ENCODE measurements at regions of chr12 and their contacts with region 1.

Region 1: GRCh38 chr12:2284857-2285256 is 232.1 kb downstream of the CACNA1C start:
- DNase-seq: peak; percentile 64 to 91
- H3K4me3 ChIP-seq: no peak overlapping the region
- H3K27ac ChIP-seq: no peak overlapping the region
- H3K4me1 ChIP-seq: peaks cover 5 to 18% (median 6%) of the 10 kb centered on the region in 4 experiments
- H3K27me3 ChIP-seq: peaks cover 0 to 3% (median 0%) of the 10 kb centered on the region in 4 experiments; a peak in 1 of 7 replicates
- CTCF ChIP-seq: peak; percentile 86 to 95 (median 90)
- EP300 ChIP-seq: no peak
- POLR2A ChIP-seq: no peak
- RAD21 ChIP-seq: peak; percentile 82 to 87

Region 2: DNA sequence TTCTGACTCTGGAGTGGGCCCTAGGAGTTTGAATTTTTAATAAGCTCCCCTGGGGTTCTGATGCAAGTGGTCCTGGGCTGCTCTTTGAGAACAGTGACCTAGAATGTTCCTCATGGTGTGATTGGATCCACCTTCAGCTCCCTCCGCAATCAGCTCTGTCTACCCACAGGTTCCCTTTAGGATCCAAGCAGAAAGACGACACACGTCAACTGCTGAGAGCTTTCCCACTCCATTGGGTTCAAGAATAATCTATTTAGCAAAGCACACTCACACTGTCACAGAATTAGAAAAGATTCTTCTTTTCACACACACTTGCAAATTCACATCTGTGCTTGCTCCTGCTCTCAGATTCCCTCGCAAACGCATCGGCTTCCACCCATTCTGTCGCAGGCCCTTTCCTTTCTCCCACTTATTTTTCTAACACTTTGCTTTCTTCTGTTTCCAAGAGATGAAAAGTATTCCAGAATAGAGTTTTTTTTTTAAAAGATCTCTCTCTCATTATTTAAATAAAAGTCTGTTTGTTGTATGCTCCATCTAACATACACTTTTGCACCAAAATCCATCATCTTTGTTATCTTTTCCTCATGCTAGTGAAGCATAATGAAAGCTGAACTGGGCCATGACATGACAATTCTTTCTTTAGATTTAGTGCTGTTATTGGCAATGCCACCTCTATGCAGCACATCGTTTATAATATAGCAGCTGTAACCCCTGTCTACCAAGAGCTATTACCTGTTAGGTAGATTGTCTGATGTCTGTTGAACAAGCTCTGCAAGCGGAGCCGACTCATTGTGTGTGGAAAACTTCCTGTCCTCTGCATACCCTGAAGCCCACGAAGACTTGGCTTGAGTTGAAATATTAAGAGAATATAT is 159.0 kb before region 1 on chr12:
- CTCF ChIA-PET with region 1: interaction called, 14 read pairs
- POLR2A ChIA-PET with region 1: no interaction called
- DNase-seq: no peak
- H3K4me3 ChIP-seq: no peak overlapping the region
- H3K27ac ChIP-seq: no peak overlapping the region
- H3K4me1 ChIP-seq: 0 out of 7 replicates have a peak, but pooled peaks cover 0 to 1% (median 0%) of the 10 kb centered on the region in 4 experiments
- H3K27me3 ChIP-seq: peaks cover 0 to 1% (median 0%) of the 10 kb centered on the region in 4 experiments; a peak in 1 of 7 replicates
- CTCF ChIP-seq: no peak
- EP300 ChIP-seq: no peak
- POLR2A ChIP-seq: no peak
- RAD21 ChIP-seq: no peak

Region 3: DNA sequence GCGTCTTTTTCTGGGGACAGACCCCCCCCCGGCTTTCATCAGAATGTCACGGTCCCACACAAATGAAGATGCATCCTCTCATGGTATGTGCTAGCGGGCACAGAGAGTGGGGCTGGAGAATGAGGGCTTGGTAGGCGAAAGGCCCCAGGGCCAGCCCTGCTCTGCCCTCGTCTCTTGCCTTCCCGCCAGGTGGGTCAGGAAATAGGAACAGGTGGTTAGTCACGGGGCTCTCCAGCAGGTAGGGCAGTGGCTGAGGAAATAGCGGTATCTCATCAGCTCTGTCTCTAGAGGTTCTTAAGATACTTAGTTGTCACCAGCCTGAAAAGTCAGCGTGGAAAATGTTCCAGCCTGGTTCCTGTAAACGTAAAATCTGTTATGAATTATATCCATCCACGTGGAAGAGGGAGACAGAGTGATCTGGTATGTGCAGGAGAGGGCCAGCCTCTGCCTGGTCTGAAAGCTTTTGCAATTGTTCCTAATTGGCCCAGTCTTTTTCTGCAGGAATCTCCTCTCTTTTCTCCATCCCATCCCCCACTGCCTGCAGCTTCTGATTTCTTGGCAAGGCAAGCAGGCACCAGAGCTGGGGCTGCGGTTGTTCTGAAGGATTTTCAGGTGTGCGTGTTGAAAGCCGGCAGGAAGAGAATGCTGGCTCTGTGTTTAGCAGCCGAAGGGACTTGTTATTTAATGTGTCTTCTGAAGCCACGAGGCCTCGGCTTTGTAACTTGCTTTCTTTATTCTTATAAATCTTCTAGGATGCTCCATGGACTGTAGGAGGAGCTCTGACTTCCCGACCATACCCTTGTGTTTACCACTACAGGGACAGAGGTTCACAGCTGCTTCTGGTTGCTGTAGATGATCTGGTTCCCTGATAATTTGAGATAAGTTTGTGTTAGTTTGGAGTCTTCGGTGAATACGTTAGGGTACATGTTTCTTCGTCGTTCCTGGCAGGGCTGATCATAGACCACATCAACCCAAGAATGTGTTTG is 101.0 kb before region 1 on chr12:
- CTCF ChIA-PET with region 1: interaction called, 13 read pairs
- POLR2A ChIA-PET with region 1: no interaction called
- DNase-seq: no peak
- H3K4me3 ChIP-seq: no peak overlapping the region
- H3K27ac ChIP-seq: no peak overlapping the region
- H3K4me1 ChIP-seq: peaks cover 0 to 14% (median 6%) of the 10 kb centered on the region in 4 experiments; a peak in 5 of 7 replicates
- H3K27me3 ChIP-seq: no peaks in the 10 kb centered on the region
- CTCF ChIP-seq: peak in 2 of 3 experiments; percentile 22 to 24; a peak in 2 of 4 replicates
- EP300 ChIP-seq: no peak
- POLR2A ChIP-seq: no peak
- RAD21 ChIP-seq: peak; percentile 26 to 49; a peak in 3 of 4 replicates

Region 4: DNA sequence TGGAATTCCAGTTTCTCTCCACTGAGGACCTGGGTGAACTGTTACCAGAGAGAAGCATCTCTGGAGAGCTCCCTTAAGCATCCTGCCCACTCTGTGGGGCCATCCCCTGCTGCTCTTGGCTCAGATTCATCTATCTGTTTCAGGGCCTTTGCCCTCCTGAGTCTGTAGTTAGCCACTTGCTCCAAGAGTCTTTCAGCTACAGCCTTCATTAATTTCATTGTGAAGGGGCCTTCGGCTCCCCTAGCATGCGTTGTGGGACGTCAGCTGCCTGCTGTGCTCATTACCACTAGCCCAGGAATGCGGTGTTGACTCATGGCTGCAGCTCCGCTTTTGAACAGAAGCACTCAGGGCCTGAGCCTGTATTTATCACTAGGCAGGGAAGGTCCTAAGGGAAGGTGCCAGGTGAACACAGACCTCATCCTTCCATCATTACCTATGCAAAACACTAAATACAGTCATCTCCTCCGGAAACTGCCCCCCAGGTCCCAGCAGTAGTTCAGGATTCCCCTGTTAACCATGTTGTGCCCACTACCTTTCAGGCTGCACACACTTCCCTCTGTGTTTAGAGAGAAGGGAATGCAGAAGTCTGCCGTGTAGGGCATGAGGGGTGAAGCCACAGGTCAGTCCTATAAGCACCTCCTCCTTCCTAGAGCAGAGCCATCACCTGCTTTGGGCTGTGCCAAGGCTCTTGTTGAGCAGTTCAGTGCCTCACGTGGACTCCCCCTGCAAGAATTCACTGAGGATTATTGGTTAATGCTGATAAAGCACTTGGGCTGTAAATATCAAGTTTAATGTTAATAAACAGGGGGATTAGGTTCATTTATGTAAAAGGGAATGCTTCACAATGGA is 40.6 kb before region 1 on chr12:
- CTCF ChIA-PET with region 1: interaction called, 19 read pairs
- POLR2A ChIA-PET with region 1: interaction called, 3 read pairs
- DNase-seq: peak in 1 of 2 experiments; percentile 57
- H3K4me3 ChIP-seq: no peak overlapping the region
- H3K27ac ChIP-seq: peak overlapping the region; percentile 37; the same call in 1 of the 2 replicates
- H3K4me1 ChIP-seq: peaks cover 10 to 22% (median 20%) of the 10 kb centered on the region in 4 experiments
- H3K27me3 ChIP-seq: no peaks in the 10 kb centered on the region
- CTCF ChIP-seq: no peak
- EP300 ChIP-seq: 0 out of 3 replicates have a peak, but pooled peaks of 1 of the 2 experiments have one; percentile 15
- POLR2A ChIP-seq: no peak
- RAD21 ChIP-seq: 0 out of 4 replicates have a peak, but pooled peaks of 1 of the 2 experiments have one; percentile 7

Region 5: DNA sequence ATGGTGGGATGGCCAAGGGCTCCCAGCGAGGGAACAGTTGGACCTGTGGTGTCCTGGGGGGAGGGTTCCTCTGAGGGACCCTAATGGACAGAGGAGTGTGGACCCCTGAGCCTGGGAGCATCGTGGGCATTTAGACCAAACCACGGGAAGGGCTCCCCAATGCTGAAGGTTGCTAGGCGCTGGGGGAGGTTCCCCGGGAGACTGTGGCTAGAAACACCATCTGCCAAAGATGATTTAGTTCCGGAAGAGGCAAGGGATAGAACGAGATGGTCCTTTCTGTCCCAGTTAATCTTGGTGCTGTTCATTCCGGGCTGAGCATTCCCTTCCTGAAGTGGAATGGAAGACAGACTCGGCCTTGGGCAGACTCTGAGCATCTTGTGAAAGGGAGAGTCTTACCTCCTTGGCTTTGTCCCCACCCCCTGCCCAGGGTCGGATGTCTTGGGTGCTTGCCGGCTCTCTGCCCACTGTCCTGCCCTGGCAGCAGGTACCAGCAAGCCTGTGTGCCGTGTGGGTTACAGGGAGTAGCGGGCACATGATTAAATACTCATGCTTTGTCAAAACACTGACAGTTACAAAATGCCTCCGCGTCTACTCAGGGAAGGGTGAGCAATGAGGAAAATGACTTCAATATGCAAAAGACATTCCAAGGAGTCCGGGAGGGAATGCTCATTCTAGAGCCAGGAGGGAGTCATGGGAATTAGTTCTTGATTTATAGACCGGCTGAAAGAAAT is 16.1 kb before region 1 on chr12:
- CTCF ChIA-PET with region 1: interaction called, 74 read pairs
- POLR2A ChIA-PET with region 1: interaction called, 3 read pairs
- DNase-seq: no peak
- H3K4me3 ChIP-seq: no peak overlapping the region
- H3K27ac ChIP-seq: no peak overlapping the region
- H3K4me1 ChIP-seq: peaks cover 0 to 12% (median 3%) of the 10 kb centered on the region in 4 experiments; a peak in 6 of 7 replicates
- H3K27me3 ChIP-seq: no peaks in the 10 kb centered on the region
- CTCF ChIP-seq: no peak
- EP300 ChIP-seq: no peak
- POLR2A ChIP-seq: no peak
- RAD21 ChIP-seq: no peak

Region 6: DNA sequence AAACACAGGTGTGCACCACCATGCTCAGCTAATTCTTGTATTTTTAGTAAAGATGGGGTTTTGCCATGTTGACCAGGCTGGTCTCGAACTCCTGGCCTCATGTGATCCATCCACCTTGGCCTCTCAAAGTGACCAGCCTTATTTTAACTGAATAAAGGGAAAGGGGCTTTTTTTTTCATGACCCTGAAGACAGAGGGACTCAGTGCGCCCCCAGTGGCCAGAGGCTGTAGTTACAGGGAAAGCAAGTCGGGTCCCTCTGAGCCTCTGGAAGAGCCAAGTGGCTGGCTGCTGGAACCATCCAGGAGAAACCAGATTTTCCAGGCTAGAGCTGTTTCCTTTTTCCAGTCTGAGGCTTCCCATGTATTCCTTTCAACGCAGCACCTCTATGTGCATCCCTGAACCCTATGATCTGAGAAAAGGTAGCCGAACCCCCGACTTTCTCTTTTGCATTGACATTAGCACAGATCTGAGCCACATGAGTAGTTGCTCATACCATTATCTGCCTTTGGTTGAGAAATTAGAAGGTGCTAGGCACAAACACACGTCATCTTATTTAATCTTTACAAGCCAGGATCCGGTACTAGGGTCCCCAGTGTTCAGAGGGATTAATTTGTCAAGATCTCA is 110.6 kb after region 1 on chr12:
- CTCF ChIA-PET with region 1: interaction called, 14 read pairs
- POLR2A ChIA-PET with region 1: no interaction called
- DNase-seq: peak; percentile 41 to 88
- H3K4me3 ChIP-seq: no peak overlapping the region
- H3K27ac ChIP-seq: no peak overlapping the region
- H3K4me1 ChIP-seq: no peaks in the 10 kb centered on the region; a peak in 1 of 7 replicates
- H3K27me3 ChIP-seq: no peaks in the 10 kb centered on the region
- CTCF ChIP-seq: peak; percentile 80 to 87 (median 86)
- EP300 ChIP-seq: no peak
- POLR2A ChIP-seq: no peak
- RAD21 ChIP-seq: peak; percentile 60 to 73